B cell (primary cell): ENCODE measurements at regions of chr6 and their contacts with region 1.

Region 1: GRCh38 chr6:73180763-73181619 is 44.3 kb downstream of the KHDC1L start:
- DNase-seq: peak; percentile 76
- ATAC-seq: peak; percentile 90
- H3K4me3 ChIP-seq: peak overlapping the region in 4 of 5 experiments; percentile 11 to 54 (median 46)
- H3K4me3 Mint-ChIP-seq: peak overlapping the region; percentile 88
- H3K27ac ChIP-seq: no peak overlapping the region
- H3K27ac Mint-ChIP-seq: peak overlapping the region; percentile 43
- H3K4me1 ChIP-seq: peaks cover 23 to 25% of the 10 kb centered on the region in 2 donors
- H3K4me1 Mint-ChIP-seq: peaks cover 12% of the 10 kb centered on the region
- H3K27me3 ChIP-seq: no peaks in the 10 kb centered on the region
- H3K27me3 Mint-ChIP-seq: no peaks in the 10 kb centered on the region
- CTCF ChIP-seq: peak; percentile 95

Region 2: GRCh38 chr6:71533939-71534379 is 1647.0 kb before region 1 on chr6:
- CTCF ChIA-PET with region 1: no interaction called
- POLR2A ChIA-PET with region 1: no interaction called
- intact Hi-C with region 1: loop called (anchors 2 kb)
- DNase-seq: peak; percentile 6
- ATAC-seq: no peak
- H3K4me3 ChIP-seq: no peak overlapping the region
- H3K4me3 Mint-ChIP-seq: no peak overlapping the region
- H3K27ac ChIP-seq: no peak overlapping the region
- H3K27ac Mint-ChIP-seq: no peak overlapping the region
- H3K4me1 ChIP-seq: no peaks in the 10 kb centered on the region
- H3K4me1 Mint-ChIP-seq: no peaks in the 10 kb centered on the region
- H3K27me3 ChIP-seq: peaks cover 0 to 4% (median 0%) of the 10 kb centered on the region in 4 experiments
- H3K27me3 Mint-ChIP-seq: peaks cover 8% of the 10 kb centered on the region
- CTCF ChIP-seq: peak; percentile 82

Region 3: GRCh38 chr6:73329201-73329600 is 148.2 kb after region 1 on chr6:
- CTCF ChIA-PET with region 1: interaction called, 4 read pairs
- POLR2A ChIA-PET with region 1: no interaction called
- intact Hi-C with region 1: loop called (anchors 1 kb)
- DNase-seq: no peak
- ATAC-seq: no peak
- H3K4me3 ChIP-seq: no peak overlapping the region
- H3K4me3 Mint-ChIP-seq: no peak overlapping the region
- H3K27ac ChIP-seq: no peak overlapping the region
- H3K27ac Mint-ChIP-seq: no peak overlapping the region
- H3K4me1 ChIP-seq: no peaks in the 10 kb centered on the region
- H3K4me1 Mint-ChIP-seq: no peaks in the 10 kb centered on the region
- H3K27me3 ChIP-seq: peaks cover 0 to 6% (median 0%) of the 10 kb centered on the region in 4 experiments
- H3K27me3 Mint-ChIP-seq: peaks cover 39% of the 10 kb centered on the region
- CTCF ChIP-seq: no peak